H1 (cell line): ENCODE measurements at regions of chr10 and their contacts with region 1.

Region 1: DNA sequence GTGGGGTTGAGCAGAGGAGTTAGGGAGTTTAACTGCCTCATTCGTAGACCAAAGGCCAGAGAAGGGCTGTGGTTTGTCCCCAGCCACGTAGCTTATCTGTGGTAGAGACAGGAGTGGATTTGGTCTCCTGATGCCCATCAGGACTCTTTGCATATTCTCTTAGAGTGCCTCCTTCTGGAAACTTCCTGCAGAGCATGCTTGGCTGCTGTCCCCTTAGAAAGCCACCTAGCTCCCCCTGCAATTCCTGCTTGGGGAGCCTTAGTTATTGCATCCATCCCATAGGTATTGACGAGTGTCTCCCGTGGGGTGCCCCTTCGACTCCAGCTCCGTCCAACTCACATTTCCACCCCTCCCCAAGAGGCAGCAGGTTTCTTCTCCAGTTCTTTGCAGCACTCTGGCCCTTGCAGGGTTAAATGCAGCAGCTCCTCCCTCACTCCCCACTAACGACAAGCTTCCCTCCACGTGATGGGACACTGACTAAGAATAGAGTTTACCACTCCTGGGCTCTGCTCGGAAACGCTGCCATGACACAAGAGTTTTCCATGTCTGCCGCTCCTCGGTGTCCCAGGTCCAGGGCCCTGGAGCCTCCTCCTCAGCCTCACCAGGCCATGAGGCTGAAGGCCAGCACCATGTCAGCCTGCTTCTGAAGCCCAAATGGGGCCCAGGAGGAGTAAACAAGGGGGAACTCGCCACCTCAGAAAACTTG is 147.8 kb upstream of the UNC5B start:
- DNase-seq: no peak
- H3K4me3 ChIP-seq: no peak overlapping the region
- H3K27ac ChIP-seq: no peak overlapping the region
- H3K4me1 ChIP-seq: peaks cover 0 to 9% (median 3%) of the 10 kb centered on the region in 4 experiments; a peak in 5 of 7 replicates
- H3K27me3 ChIP-seq: no peaks in the 10 kb centered on the region
- CTCF ChIP-seq: peak; percentile 3 to 57 (median 53)
- EP300 ChIP-seq: no peak
- POLR2A ChIP-seq: no peak
- RAD21 ChIP-seq: peak; percentile 34 to 52

Region 2: DNA sequence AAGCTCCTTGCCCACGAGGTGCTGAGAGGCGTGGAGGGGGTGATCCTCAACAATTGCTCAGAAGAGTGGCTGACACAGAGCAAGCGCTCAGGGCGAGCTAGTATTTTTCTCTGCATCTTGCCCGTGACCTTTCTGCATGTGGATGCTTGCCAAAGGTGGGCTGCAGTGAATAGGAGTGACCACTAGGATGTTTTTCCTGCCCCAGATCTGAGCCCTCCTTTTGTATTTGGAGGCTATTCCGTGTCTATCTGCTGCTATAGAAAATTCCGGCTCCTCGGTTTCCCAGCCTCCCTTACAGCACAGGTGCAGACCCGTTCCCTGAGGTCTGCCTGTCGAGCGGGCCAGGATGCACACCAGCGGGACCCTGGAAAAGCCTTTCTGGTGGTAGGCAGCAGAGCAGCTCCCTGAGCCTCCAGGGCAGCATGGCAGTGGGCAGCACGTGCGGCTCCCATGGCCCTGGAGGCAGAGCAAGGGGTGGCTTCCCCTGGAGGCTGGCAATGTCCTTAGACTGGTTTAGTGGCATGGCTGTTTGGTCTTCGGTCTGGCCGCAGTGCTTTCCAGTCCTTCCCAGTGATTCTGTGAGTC is 31.1 kb before region 1 on chr10:
- CTCF ChIA-PET with region 1: interaction called, 31 read pairs
- POLR2A ChIA-PET with region 1: no interaction called
- DNase-seq: no peak
- H3K4me3 ChIP-seq: no peak overlapping the region
- H3K27ac ChIP-seq: no peak overlapping the region
- H3K4me1 ChIP-seq: peaks cover 0 to 2% (median 0%) of the 10 kb centered on the region in 4 experiments; a peak in 1 of 7 replicates
- H3K27me3 ChIP-seq: no peaks in the 10 kb centered on the region; a peak in 1 of 7 replicates
- CTCF ChIP-seq: peak; percentile 28 to 61 (median 33)
- EP300 ChIP-seq: no peak
- POLR2A ChIP-seq: no peak
- RAD21 ChIP-seq: peak in 1 of 2 experiments; percentile 42; a peak in 2 of 4 replicates

Region 3: GRCh38 chr10:71052076-71052660 is 12.4 kb before region 1 on chr10:
- CTCF ChIA-PET with region 1: interaction called, 25 read pairs
- POLR2A ChIA-PET with region 1: interaction called, 5 read pairs
- DNase-seq: no peak
- H3K4me3 ChIP-seq: no peak overlapping the region
- H3K27ac ChIP-seq: no peak overlapping the region
- H3K4me1 ChIP-seq: no peaks in the 10 kb centered on the region
- H3K27me3 ChIP-seq: no peaks in the 10 kb centered on the region
- CTCF ChIP-seq: no peak
- EP300 ChIP-seq: no peak
- POLR2A ChIP-seq: no peak
- RAD21 ChIP-seq: no peak

Region 4: DNA sequence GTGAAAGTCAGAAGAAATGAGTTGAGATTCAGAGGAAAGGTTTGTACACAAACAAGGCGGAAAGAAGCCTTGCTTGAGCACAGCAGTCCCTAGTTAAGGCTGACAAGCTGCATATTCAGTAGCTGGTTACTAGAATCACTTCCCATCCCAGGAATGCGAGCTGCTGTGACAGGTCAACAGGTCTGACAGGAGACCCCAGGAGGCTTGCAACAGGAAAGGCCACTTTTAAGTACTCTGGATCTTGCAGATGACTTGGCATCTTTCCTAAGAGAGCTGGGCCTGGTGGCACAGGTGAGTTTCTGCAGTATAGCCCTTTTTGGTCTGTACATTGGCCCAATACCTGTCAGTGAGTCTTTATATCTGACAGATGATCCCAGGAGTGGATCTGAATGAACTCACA is 112.1 kb after region 1 on chr10:
- CTCF ChIA-PET with region 1: interaction called, 10 read pairs
- POLR2A ChIA-PET with region 1: no interaction called
- DNase-seq: no peak
- H3K4me3 ChIP-seq: no peak overlapping the region
- H3K27ac ChIP-seq: no peak overlapping the region
- H3K4me1 ChIP-seq: peaks cover 0 to 10% (median 3%) of the 10 kb centered on the region in 4 experiments; a peak in 3 of 7 replicates
- H3K27me3 ChIP-seq: no peaks in the 10 kb centered on the region; a peak in 2 of 7 replicates
- CTCF ChIP-seq: no peak
- EP300 ChIP-seq: no peak
- POLR2A ChIP-seq: no peak
- RAD21 ChIP-seq: no peak

Region 5: DNA sequence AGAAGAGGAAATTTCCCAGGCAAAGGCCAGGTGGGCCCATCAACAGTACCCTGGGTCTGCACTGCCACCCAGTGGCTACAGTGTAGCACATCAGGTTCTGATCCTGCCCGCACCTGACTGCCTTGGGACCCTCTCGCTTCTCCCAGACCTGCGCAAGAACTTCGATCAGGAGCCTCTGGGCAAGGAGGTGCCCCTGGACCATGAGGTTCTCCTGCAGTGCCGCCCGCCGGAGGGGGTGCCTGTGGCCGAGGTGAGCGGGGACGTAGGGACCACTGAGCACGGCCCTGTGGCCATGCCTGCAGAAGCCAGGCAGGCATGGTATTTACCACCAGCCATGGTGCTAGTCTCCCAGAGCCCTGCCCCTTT is 220.6 kb after region 1 on chr10:
- CTCF ChIA-PET with region 1: interaction called, 13 read pairs
- POLR2A ChIA-PET with region 1: no interaction called
- DNase-seq: peak in 1 of 2 experiments; percentile 85
- H3K4me3 ChIP-seq: no peak overlapping the region
- H3K27ac ChIP-seq: no peak overlapping the region
- H3K4me1 ChIP-seq: no peaks in the 10 kb centered on the region
- H3K27me3 ChIP-seq: no peaks in the 10 kb centered on the region
- CTCF ChIP-seq: peak; percentile 80 to 85 (median 85)
- EP300 ChIP-seq: no peak
- POLR2A ChIP-seq: no peak
- RAD21 ChIP-seq: peak; percentile 91